K562 (cell line): ENCODE measurements at regions of chr3 and their contacts with region 1.

Region 1: GRCh38 chr3:97793420-97794019 is 28.3 kb upstream of the CRYBG3 start:
- DNase-seq: peak in 3 of 4 experiments; percentile 5 to 53 (median 7)
- ATAC-seq: 0 out of 3 replicates have a peak, but pooled peaks have one; percentile 42
- H3K4me3 ChIP-seq: no peak overlapping the region
- H3K27ac ChIP-seq: no peak overlapping the region
- H3K4me1 ChIP-seq: no peaks in the 10 kb centered on the region
- H3K27me3 ChIP-seq: no peaks in the 10 kb centered on the region
- CTCF ChIP-seq: peak; percentile 40 to 71 (median 53); a peak in 5 of 6 replicates
- EP300 ChIP-seq: no peak
- POLR2A ChIP-seq: no peak
- RAD21 ChIP-seq: peak; percentile 71 to 89

Region 2: DNA sequence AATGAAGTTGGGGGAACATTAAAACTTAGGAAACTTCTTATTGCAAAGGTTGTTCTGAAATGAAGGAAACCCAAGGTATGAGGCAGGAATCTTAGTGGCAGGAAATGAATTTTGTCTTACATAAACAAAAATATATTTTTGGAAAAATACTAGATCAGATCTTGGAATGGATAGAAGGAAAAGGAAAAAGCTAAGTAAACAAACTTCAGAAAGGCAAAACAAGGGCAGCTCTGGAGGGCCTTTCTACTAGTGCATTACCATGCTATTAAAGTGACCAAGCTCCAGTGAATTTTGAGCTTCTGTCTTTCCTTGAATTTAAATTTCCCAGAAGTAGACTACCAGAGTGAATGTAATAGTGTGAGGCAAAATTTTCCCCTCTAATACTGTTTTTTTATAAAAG is 15.4 kb before region 1 on chr3:
- CTCF ChIA-PET with region 1: no interaction called
- POLR2A ChIA-PET with region 1: no interaction called
- in situ Hi-C with region 1: no loop called
- intact Hi-C with region 1: no loop called
- DNase-seq: no peak
- ATAC-seq: no peak
- H3K4me3 ChIP-seq: no peak overlapping the region
- H3K27ac ChIP-seq: no peak overlapping the region
- H3K4me1 ChIP-seq: no peaks in the 10 kb centered on the region
- H3K27me3 ChIP-seq: no peaks in the 10 kb centered on the region
- CTCF ChIP-seq: no peak
- EP300 ChIP-seq: no peak
- POLR2A ChIP-seq: no peak
- RAD21 ChIP-seq: no peak

Region 3: GRCh38 chr3:97981886-97982285 is 188.4 kb after region 1 on chr3:
- CTCF ChIA-PET with region 1: no interaction called
- POLR2A ChIA-PET with region 1: no interaction called
- in situ Hi-C with region 1: no loop called
- intact Hi-C with region 1: loop called (anchors 5 kb)
- DNase-seq: no peak
- ATAC-seq: no peak
- H3K4me3 ChIP-seq: no peak overlapping the region
- H3K27ac ChIP-seq: no peak overlapping the region
- H3K4me1 ChIP-seq: no peaks in the 10 kb centered on the region; a peak in 1 of 5 replicates
- H3K27me3 ChIP-seq: no peaks in the 10 kb centered on the region
- CTCF ChIP-seq: no peak
- EP300 ChIP-seq: no peak
- POLR2A ChIP-seq: no peak
- RAD21 ChIP-seq: no peak

Region 4: DNA sequence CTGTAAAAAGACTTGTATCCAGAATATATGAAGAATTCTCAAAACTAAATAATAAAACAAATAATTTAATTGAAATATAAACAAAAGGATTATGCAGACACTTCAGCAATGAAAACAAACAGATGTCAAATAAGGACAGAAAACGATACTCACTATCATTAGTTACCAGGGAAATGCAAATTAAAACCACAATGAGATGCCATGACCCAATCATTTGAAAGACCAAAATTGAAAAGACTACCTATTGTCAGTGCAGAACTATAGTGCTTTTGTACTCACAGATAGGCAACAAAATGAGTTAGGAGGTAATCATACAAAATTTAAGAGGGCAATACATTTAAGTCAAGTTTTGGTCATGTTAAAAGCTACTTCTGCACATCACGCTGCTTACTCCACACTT is 528.6 kb after region 1 on chr3:
- CTCF ChIA-PET with region 1: no interaction called
- POLR2A ChIA-PET with region 1: no interaction called
- in situ Hi-C with region 1: loop called (anchors 25 kb)
- intact Hi-C with region 1: no loop called
- DNase-seq: no peak
- ATAC-seq: no peak
- H3K4me3 ChIP-seq: no peak overlapping the region
- H3K27ac ChIP-seq: no peak overlapping the region
- H3K4me1 ChIP-seq: no peaks in the 10 kb centered on the region
- H3K27me3 ChIP-seq: no peaks in the 10 kb centered on the region
- CTCF ChIP-seq: no peak
- EP300 ChIP-seq: no peak
- POLR2A ChIP-seq: no peak
- RAD21 ChIP-seq: no peak